ENCODE measurements at regions of chr11 and their contacts with region 1.

Region 1: DNA sequence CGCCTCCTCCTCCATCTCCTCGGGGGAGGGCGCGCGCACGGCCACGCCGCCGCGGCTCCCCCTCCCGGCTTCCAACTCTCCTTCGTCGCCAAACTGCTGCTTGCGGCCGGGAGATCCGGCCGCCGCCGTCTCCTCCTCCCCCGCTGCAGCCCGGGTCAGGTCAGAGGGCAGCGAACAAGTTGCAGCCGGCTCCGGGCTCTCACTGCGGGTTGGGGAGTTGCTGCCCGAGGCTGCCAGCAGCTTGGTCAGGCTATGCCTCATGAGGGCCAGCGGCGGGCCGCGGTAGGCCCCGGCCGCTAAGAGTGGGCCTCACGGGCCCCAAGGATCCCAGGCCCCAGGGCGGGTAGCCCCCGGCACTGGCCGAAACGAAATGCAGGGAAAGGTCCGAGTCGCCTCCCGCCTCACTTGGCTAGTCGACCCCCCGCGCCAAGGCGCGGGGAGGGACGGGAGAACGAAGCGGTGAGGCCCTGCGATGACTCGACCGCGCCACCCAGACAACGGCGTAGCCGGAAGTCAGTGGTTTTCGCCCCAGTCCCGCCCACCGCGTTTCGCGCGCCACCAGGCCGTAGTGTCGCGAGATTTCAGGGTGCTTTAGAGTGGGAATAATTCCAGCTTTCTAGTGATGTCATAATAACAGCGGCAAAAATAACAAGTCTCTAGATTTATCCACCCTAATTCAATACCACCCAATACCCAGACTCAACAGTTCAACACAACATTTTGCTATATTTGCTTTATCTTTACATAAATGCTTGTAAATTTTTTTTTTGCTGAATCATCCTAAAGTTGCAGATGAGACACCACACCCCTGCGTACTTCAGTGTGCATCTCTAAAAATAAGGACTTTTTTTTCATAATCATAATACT is at the start of gene CREBZF:
- DNase-seq: peak; percentile 94
- H3K4me3 Mint-ChIP-seq: peak within 1 kb of the TSS; percentile 99
- H3K27ac Mint-ChIP-seq: peak within 1 kb of the TSS; percentile 96
- H3K4me1 Mint-ChIP-seq: peaks cover 33% of the 10 kb centered on the region
- H3K27me3 Mint-ChIP-seq: no peaks in the 10 kb centered on the region
- total RNA-seq, gene CREBZF: 47.8 and 49.7 TPM in 2 replicates

Region 2: GRCh38 chr11:85572056-85572455 is 92.8 kb before region 1 on chr11:
- intact Hi-C with region 1: no loop called
- DNase-seq: no peak
- H3K4me3 Mint-ChIP-seq: no peak overlapping the region
- H3K27ac Mint-ChIP-seq: no peak overlapping the region
- H3K4me1 Mint-ChIP-seq: peaks cover 6% of the 10 kb centered on the region
- H3K27me3 Mint-ChIP-seq: peaks cover 17% of the 10 kb centered on the region

Region 3: DNA sequence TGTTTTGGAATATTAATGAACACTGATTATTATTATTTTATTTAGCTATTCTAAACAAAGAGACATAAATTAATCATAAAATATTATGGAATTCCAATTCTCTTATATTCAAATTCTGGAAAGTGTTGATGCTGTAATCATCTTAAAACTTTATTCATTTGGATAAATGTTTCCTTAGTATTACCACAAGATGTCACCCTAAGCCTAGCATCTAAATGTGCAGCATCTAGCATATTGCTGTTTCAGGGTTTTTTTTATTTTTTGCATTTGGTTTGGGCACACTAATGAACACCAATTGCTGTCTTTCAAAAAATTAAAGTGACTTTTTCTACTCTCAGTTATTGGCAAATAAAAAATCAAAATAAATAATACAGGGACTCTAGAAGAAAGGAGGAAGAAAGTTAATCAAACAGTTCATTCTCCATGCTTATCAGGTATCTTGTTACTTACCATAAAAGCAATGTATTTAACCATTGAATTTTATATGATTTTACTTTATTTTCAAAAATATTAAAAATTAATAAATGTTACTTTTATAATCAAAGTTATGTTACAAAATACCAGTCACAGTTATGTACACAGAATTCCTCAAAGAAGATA is 69.5 kb before region 1 on chr11:
- intact Hi-C with region 1: loop called (anchors 5 kb)
- DNase-seq: no peak
- H3K4me3 Mint-ChIP-seq: no peak overlapping the region
- H3K27ac Mint-ChIP-seq: no peak overlapping the region
- H3K4me1 Mint-ChIP-seq: no peaks in the 10 kb centered on the region
- H3K27me3 Mint-ChIP-seq: peaks cover 15% of the 10 kb centered on the region

Region 4: GRCh38 chr11:85647604-85648299 is 17.1 kb before region 1 on chr11 and contains the start of gene TMEM126A:
- intact Hi-C with region 1: loop called (anchors 1 kb)
- DNase-seq: peak; percentile 86
- H3K4me3 Mint-ChIP-seq: peak within 1 kb of the TSS; percentile 95
- H3K27ac Mint-ChIP-seq: peak within 1 kb of the TSS; percentile 92
- H3K4me1 Mint-ChIP-seq: peaks cover 19% of the 10 kb centered on the region
- H3K27me3 Mint-ChIP-seq: peaks cover 16% of the 10 kb centered on the region
- total RNA-seq, gene TMEM126A: 48.9 and 49.3 TPM in 2 replicates

Region 5: DNA sequence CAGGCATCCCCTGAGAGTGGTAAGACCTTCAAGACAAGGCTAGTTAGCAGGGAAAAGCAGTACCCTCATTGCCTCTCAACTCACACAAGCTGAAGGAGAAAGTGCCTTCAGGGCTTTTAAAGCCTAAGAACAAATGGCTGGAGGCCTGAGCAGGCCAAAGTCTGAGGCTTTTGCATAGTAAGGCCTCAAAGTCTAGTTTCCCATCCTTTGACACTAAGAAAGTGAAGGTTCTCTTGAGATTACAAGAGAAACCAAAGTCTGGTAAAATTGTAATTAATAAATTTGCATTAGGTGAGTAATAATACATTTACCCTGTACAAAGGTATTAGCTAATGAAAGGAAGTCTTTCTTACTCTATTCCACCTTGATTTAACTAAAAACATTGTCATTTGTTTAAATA is 68.1 kb after region 1 on chr11:
- intact Hi-C with region 1: no loop called
- DNase-seq: no peak
- H3K4me3 Mint-ChIP-seq: no peak overlapping the region
- H3K27ac Mint-ChIP-seq: no peak overlapping the region
- H3K4me1 Mint-ChIP-seq: peaks cover 7% of the 10 kb centered on the region
- H3K27me3 Mint-ChIP-seq: peaks cover 2% of the 10 kb centered on the region

Region 6: DNA sequence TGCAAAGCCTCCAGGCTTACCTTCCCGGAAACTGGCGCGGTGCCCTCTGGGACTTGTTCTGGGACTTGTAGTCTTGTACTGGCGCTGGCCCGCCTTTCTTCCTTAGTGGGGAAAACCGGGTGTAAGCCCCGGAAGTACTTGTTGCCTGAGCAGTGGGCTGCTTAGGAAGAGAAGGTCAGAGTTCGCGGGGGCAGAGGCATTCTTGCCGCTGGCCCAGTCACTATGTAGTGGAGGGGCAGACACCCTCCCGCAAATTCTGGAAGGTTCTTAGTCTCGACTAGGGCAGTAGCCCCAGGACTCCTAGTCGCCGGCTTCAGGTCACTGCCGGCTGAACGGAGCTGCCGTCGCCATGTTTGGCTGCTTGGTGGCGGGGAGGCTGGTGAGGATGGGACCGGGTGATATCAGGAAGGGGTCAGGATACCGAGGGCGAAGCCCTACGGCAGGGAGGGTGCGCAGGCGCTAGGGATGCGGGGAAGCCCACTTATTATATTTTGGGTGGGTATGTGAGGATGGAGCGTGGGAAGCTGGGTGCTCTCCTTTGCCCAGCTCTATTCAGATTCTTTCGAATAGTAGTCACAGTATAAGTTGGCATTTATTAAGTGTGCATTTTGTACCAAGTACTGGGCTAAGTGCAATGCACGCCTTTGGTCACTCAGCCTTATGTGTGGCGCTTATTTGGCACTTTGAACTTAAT is 637.4 kb after region 1 on chr11 and contains the start of gene HIKESHI:
- intact Hi-C with region 1: loop called (anchors 1 kb)
- DNase-seq: peak; percentile 81
- H3K4me3 Mint-ChIP-seq: peak within 1 kb of the TSS; percentile 99
- H3K27ac Mint-ChIP-seq: peak within 1 kb of the TSS; percentile 96
- H3K4me1 Mint-ChIP-seq: peaks cover 25% of the 10 kb centered on the region
- H3K27me3 Mint-ChIP-seq: peaks cover 3% of the 10 kb centered on the region
- total RNA-seq, gene HIKESHI: 49.1 and 56.0 TPM in 2 replicates